ENCODE measurements at regions of chr2 and their contacts with region 1.

Region 1: GRCh38 chr2:56382466-56382865 is 198.7 kb downstream of the CCDC85A start:
- DNase-seq: no peak
- H3K4me3 ChIP-seq: no peak overlapping the region
- H3K27me3 ChIP-seq: no peaks in the 10 kb centered on the region
- CTCF ChIP-seq: no peak

Region 2: GRCh38 chr2:56177420-56178220 is 204.8 kb before region 1 on chr2:
- CTCF ChIA-PET with region 1: no interaction called
- POLR2A ChIA-PET with region 1: no interaction called
- DNase-seq: no peak
- H3K4me3 ChIP-seq: no peak overlapping the region
- H3K27me3 ChIP-seq: no peaks in the 10 kb centered on the region
- CTCF ChIP-seq: no peak

Region 3: DNA sequence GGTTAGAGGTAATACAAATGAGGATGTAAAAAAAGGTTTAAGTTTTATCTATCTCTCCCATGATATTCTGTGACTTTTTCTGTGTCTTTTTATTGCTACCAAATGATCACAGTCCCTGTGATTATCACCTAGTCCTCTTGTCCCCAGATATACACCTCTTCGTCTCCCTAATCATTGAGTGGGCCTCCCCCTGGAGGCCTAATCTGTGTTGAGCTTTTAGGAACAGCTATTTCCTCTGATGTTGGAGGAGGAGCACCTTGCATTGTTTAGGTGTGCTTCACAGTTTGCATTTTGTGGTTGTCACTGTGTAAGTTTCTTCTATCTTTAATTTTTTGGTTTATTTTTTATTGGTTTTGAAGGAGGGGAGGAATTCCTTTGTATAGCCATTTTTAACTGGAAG is 165.4 kb before region 1 on chr2:
- CTCF ChIA-PET with region 1: no interaction called
- POLR2A ChIA-PET with region 1: interaction called, 19 read pairs
- DNase-seq: no peak
- H3K4me3 ChIP-seq: no peak overlapping the region
- H3K27me3 ChIP-seq: no peaks in the 10 kb centered on the region
- CTCF ChIP-seq: no peak

Region 4: DNA sequence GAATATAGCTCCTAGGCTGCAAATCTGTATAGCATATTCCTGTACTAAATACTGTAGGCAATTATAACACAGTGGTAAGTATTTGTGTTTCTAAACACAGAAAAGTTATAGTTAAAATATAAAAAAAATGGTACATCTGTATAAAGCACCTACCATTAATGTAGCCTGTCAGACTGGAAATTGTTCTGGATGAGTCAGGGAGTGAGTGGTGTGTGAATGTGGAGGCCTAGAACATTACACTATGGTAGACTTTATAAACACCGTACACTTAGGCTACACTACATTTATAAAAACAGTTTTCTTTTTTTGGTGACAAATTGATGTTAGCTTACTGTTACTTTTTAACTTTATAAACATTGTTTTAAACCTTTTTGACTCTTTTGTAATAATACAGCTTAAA is 27.7 kb after region 1 on chr2:
- CTCF ChIA-PET with region 1: no interaction called
- POLR2A ChIA-PET with region 1: no interaction called
- DNase-seq: no peak
- H3K4me3 ChIP-seq: no peak overlapping the region
- H3K27me3 ChIP-seq: no peaks in the 10 kb centered on the region
- CTCF ChIP-seq: no peak

Measured in BJ (cell line).